Head of caudate nucleus (tissue), 42 donors: ENCODE measurements at regions of chr22 and their contacts with region 1.

Region 1: DNA sequence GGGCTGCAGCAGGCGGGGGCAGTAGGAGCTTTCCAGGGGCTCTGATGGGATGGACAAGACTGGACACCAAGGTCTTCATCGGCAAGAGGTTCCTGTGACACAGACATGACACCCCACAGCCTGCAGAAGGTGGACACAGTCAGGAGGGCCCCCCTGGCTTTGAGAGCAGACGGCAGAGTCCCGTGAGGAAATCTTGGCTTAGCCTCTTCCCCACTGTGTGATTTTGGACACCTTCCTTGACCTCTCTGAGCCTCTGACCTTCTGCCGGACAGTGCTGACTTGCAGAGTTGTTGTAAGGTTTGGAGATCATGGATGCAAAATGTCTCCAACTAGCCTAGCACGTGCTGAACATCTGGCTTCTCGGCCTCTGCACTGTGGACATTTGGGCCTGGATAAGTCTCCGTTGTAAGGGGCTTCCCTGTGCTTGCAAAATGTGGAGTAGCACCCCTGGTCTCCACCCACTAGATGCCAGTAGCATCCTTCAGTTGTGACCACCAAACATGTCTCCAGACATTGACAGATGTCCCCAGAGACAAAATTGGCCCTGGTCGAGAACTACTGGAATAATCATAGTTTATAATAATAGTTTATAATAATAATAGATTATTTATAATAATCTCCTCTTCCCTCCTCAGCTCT is 54.6 kb downstream of the MCM5 start:
- DNase-seq: peak in 11 of 42 donors; percentile 22 to 67 (median 43)

Region 2: GRCh38 chr22:35510481-35510934 is 56.0 kb after region 1 on chr22:
- intact Hi-C with region 1: loop called (anchors 5 kb)
- DNase-seq: peak in 13 of 42 donors; percentile 18 to 77 (median 47)

Region 3: GRCh38 chr22:35523167-35523947 is 68.8 kb after region 1 on chr22:
- intact Hi-C with region 1: no loop called
- DNase-seq: peak in 1 of 42 donors; percentile 34